ENCODE measurements at regions of chr1 and their contacts with region 1.

Region 1: GRCh38 chr1:229270547-229271447 is at the start of gene RAB4A:
- DNase-seq: peak; percentile 95
- H3K4me3 Mint-ChIP-seq: peak within 1 kb of the TSS; percentile 91
- H3K27ac Mint-ChIP-seq: peak within 1 kb of the TSS; percentile 83
- H3K4me1 Mint-ChIP-seq: peaks cover 20% of the 10 kb centered on the region
- H3K27me3 Mint-ChIP-seq: no peaks in the 10 kb centered on the region
- total RNA-seq, gene RAB4A: 30.7 and 34.8 TPM in 2 replicates

Region 2: DNA sequence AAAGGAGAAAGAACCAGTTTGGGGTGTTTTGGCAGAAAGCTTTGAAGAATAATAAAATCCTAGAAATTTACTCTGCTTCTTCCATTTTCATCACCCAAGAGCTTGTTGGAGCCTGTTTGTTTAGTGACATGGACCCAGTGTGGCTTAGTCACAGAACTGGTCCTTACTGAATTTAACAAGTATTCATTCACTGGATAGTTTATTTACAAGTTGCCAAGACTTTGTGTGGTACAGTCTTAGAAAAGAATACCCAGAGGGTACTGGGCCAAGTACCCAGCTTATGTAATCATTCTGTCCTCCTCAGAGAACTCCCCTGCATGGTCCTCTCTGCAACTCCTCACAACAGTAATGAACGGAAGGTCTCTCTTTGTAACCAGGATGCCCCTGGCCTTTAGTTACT is 16.5 kb after region 1 on chr1:
- intact Hi-C with region 1: loop called (anchors 2 kb)
- DNase-seq: no peak
- H3K4me3 Mint-ChIP-seq: no peak overlapping the region
- H3K27ac Mint-ChIP-seq: no peak overlapping the region
- H3K4me1 Mint-ChIP-seq: peaks cover 30% of the 10 kb centered on the region
- H3K27me3 Mint-ChIP-seq: no peaks in the 10 kb centered on the region

Region 3: GRCh38 chr1:229341774-229342655 is 71.2 kb after region 1 on chr1:
- intact Hi-C with region 1: loop called (anchors 2 kb)
- DNase-seq: peak; percentile 96
- H3K4me3 Mint-ChIP-seq: peak overlapping the region; percentile 91
- H3K27ac Mint-ChIP-seq: peak overlapping the region; percentile 94
- H3K4me1 Mint-ChIP-seq: peaks cover 48% of the 10 kb centered on the region
- H3K27me3 Mint-ChIP-seq: peaks cover 20% of the 10 kb centered on the region

Region 4: DNA sequence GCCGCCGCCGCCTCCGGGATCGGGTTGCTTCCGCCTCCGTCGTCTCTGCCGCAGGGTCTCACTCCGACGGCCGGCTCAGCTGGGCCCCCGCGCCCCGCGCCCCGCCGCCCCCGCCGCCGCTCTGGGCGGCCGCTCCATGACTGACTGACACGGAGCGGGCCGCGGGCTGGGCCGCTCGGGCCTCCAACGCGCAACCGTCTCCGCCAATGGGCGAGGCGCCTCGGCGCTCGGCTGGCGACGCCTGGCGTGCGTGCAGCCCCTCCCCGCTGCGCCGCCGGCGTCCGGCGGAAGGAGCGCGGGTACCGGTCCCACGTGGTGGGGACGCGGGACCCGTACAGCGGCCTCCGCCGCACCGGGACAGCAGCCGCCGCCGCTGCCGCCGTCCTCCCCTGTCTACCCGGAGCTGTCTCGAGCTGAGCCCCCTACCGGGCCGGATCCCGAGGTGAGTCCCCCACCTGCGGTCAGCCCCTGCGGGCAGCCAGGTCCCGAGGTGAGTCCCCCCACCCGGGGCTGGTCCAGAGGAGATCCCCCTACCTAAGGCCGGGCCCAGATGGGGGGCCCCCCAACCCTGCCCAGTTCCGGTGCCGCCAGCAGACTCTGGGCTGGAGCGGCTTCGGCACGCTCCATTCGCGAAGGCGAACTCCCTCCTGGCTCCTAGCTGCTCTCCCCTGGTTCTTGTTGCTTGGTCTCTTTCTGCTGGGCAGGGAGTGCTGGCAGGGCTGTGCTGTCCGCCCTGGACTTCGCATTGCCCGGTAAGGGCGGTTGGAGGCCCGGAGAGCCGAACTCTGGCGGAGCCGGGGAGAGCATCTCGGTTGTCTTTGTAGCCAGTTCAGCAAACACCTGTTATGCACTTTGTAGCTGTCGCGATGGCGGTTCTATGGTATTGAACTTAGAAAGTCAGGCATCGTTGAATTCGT is 355.4 kb after region 1 on chr1 and contains the starts of genes TAF5L and URB2:
- intact Hi-C with region 1: loop called (anchors 5 kb)
- DNase-seq: peak; percentile 97
- H3K4me3 Mint-ChIP-seq: peak within 1 kb of the TSS; percentile 99
- H3K27ac Mint-ChIP-seq: peak within 1 kb of the TSS; percentile 96
- H3K4me1 Mint-ChIP-seq: peaks cover 49% of the 10 kb centered on the region
- H3K27me3 Mint-ChIP-seq: no peaks in the 10 kb centered on the region
- total RNA-seq, gene TAF5L: 29.7 and 30.7 TPM in 2 replicates
- total RNA-seq, gene URB2: 35.8 and 37.1 TPM in 2 replicates

Measured in activated CD4-positive, alpha-beta T cell treated with anti-CD3 and anti-CD28 coated beads, Interleukin-2, amount 10 ng/mL, durations not matched to agents 24 days and 14 days (primary cell).